Activated CD4-positive, alpha-beta T cell treated with anti-CD3 and anti-CD28 coated beads, Interleukin-2, amount 10 ng/mL, durations not matched to agents 24 days and 14 days (primary cell): ENCODE measurements at regions of chr14 and their contacts with region 1.

Region 1: DNA sequence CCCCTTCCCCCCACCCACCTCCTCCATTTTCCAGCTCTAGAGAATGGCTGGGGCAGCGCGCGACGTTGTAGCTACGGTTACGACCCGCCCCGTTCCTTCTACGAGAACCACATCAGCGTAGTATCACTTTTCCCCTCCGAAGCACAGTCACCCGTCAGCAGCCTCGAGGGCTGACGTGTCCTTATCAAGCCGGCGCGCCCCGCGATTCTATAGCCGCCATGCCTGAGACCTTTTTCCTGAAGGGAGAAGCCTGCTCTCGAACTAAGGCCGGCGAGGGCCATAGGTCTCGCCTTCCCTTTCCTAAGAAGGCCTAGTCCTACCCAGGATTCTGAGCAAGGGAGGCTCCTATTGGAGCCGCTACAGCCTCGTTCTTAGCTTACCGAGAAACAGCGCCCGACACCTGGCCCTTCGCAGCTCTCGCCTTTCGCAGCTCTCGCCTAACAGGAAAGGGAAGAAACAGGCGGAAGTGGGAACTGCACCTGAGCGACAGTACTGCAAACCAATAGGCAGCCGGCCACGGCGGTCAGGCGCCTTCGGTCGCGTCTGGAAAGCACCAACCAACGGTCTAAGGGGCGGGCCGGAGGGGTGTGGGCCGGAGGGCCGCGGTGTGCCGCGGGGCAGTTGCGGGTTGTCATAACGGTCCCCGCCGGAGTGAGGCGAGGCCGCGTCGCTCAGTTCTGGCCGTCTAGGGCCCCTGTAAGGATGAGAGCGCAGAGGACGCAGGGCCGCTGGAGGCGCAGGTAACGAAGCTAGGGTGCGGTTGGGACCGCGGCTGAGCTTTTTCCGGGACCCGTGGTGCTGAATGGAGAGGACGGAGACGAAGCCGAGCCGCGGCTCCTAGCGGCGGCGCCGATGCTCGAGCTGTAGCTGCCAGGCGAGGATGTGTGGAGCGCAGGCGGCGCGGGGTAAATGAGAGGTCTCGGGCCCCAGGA is at the starts of genes MGAT2 and RPL36AL:
- DNase-seq: peak; percentile 99
- H3K4me3 Mint-ChIP-seq: peak within 1 kb of the TSS; percentile 96
- H3K27ac Mint-ChIP-seq: peak within 1 kb of the TSS; percentile 96
- H3K4me1 Mint-ChIP-seq: peaks cover 36% of the 10 kb centered on the region
- H3K27me3 Mint-ChIP-seq: no peaks in the 10 kb centered on the region
- total RNA-seq, gene MGAT2: 45.6 and 48.5 TPM in 2 replicates
- total RNA-seq, gene RPL36AL: 221 and 229 TPM in 2 replicates

Region 2: GRCh38 chr14:49598485-49599300 is 21.8 kb before region 1 on chr14 and contains the start of gene LRR1:
- intact Hi-C with region 1: loop called (anchors 1 kb)
- DNase-seq: peak; percentile 97
- H3K4me3 Mint-ChIP-seq: peak within 1 kb of the TSS; percentile 96
- H3K27ac Mint-ChIP-seq: peak within 1 kb of the TSS; percentile 94
- H3K4me1 Mint-ChIP-seq: peaks cover 25% of the 10 kb centered on the region
- H3K27me3 Mint-ChIP-seq: no peaks in the 10 kb centered on the region
- total RNA-seq, gene LRR1: 47.7 and 50.4 TPM in 2 replicates

Region 3: DNA sequence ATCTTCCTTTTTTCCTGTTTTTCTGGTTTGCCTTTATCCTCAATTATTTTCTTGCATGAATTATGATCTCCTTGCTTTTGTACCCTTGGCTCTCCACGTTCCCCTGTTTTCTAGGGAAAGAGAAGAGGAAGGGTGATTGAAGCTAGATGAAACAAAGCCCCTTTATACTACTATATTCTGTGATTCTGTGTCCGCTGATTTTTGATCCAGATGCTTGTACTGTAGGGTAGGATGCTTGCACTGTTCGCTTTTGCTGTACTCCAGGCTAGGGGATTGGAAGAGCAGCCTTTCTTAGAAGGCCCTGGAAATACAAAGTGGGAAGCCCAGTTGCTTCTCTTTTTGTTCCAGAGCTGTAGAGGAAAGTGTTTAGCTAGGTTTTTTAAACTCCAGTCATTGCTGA is 112.4 kb after region 1 on chr14:
- intact Hi-C with region 1: no loop called
- DNase-seq: peak; percentile 41
- H3K4me3 Mint-ChIP-seq: no peak overlapping the region
- H3K27ac Mint-ChIP-seq: no peak overlapping the region
- H3K4me1 Mint-ChIP-seq: no peaks in the 10 kb centered on the region
- H3K27me3 Mint-ChIP-seq: no peaks in the 10 kb centered on the region